ENCODE measurements at regions of chr5 and their contacts with region 1.

Region 1: GRCh38 chr5:97534166-97534565 is 351.1 kb upstream of the RIOK2 start:
- DNase-seq: peak; percentile 60
- H3K4me3 Mint-ChIP-seq: no peak overlapping the region
- H3K27ac Mint-ChIP-seq: no peak overlapping the region
- H3K4me1 Mint-ChIP-seq: peaks cover 23% of the 10 kb centered on the region
- H3K27me3 Mint-ChIP-seq: no peaks in the 10 kb centered on the region
- CTCF ChIP-seq: peak; percentile 56

Region 2: DNA sequence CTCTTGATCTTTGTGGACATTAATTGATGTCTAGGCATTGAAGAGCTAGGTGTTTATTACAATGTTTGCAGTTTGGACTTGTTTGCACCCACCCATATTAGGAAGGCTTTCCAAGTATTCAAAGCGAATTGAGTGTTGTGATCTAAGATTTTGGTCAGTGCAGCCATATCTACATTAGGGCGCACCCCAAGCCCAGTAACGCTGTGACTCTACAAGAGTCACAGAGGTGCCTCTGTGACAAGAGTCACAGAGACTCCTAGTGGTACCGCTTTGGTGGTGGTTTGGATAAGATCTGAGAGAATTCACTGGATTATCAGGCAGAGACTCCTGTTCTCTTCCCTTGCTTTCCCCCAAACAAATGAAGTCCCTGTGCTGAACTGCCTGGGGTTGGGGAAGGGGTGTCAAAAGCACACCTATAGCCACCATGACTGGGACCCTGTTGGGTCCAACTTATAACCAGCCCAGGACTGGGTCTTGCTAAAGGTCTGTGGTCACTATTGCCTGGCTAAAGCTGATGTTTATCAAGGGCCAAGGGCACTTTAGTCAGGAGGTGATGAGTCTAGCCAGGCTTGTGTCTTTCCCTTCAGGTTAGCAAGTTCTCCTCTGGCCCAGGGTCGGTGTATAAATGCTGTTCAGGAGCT is 237.0 kb before region 1 on chr5:
- CTCF ChIA-PET with region 1: interaction called, 5 read pairs
- intact Hi-C with region 1: loop called (anchors 5 kb)
- DNase-seq: peak; percentile 63
- H3K4me3 Mint-ChIP-seq: no peak overlapping the region
- H3K27ac Mint-ChIP-seq: no peak overlapping the region
- H3K4me1 Mint-ChIP-seq: no peaks in the 10 kb centered on the region
- H3K27me3 Mint-ChIP-seq: no peaks in the 10 kb centered on the region
- CTCF ChIP-seq: peak; percentile 59